Transverse colon (tissue), 4 donors: ENCODE measurements at regions of chr4 and their contacts with region 1.

Region 1: GRCh38 chr4:82739316-82740179 is 59.0 kb downstream of the SCD5 start:
- DNase-seq: peak; percentile 81
- H3K4me3 ChIP-seq: no peak overlapping the region
- H3K27ac ChIP-seq: no peak overlapping the region
- H3K4me1 ChIP-seq: no peaks in the 10 kb centered on the region
- H3K27me3 ChIP-seq: no peaks in the 10 kb centered on the region
- CTCF ChIP-seq: peak; percentile 78 to 99 (median 95)
- EP300 ChIP-seq: no peak
- POLR2A ChIP-seq: no peak

Region 2: GRCh38 chr4:82469791-82470345 is 269.7 kb before region 1 on chr4:
- in situ Hi-C with region 1: loop called in 3 of 4 experiments (anchors 5 to 10 kb)
- intact Hi-C with region 1: no loop called
- DNase-seq: no peak
- H3K4me3 ChIP-seq: no peak overlapping the region
- H3K27ac ChIP-seq: no peak overlapping the region
- H3K4me1 ChIP-seq: no peaks in the 10 kb centered on the region
- H3K27me3 ChIP-seq: no peaks in the 10 kb centered on the region
- CTCF ChIP-seq: no peak
- EP300 ChIP-seq: no peak
- POLR2A ChIP-seq: no peak

Region 3: DNA sequence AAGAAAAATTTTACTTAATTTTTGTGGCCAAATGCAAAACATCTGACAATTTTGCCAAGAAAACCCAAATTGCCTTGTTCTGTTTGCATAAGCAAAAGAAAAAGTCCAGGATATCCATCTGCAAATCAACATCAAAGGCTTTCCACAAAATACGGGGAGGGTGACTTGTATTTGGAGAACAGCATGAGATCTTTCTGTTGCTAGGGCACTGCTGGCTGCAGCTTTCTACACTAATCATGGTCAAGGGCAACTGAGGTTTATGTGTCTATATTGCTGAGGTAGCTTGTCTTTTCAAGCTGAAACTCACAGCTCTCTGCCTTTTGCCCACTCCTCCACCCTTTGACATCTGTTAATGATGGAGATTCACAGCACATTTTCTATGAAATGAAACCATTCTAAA is 1370.5 kb after region 1 on chr4:
- in situ Hi-C with region 1: no loop called
- intact Hi-C with region 1: no loop called
- DNase-seq: no peak
- H3K4me3 ChIP-seq: no peak overlapping the region
- H3K27ac ChIP-seq: no peak overlapping the region
- H3K4me1 ChIP-seq: no peaks in the 10 kb centered on the region
- H3K27me3 ChIP-seq: no peaks in the 10 kb centered on the region
- CTCF ChIP-seq: no peak
- EP300 ChIP-seq: no peak
- POLR2A ChIP-seq: no peak